HepG2 (cell line): ENCODE measurements at regions of chr3 and their contacts with region 1.

Region 1: DNA sequence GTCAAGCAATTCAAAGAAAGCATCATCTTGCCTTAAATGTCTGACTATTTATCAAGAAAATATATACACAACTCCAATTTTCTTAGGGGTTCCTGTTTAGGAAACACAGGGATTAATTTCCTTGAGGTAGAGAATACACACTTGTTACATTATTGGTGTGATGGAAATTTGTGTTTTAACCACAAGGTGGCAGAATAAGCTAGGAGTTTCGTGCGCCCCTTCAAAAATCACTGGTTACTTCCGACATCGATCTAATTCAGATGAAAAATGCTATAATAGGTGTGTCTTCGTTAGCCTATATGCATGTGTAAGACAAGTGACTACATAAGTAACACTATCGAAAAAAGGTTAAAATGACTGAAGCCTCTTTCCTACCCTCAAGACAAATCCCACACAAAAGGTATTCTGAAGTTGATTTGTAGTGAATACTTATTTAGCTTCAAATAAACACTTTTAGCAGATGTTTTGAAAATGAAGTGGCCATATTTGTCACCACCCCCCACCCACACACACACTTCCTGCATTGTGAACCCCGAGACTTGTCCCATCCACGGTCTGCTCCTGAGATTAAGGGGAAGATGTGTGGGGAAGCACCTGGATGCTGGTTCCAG is 246.5 kb downstream of the ROBO1 start:
- DNase-seq: peak; percentile 35
- ATAC-seq: peak; percentile 71
- H3K4me3 ChIP-seq: no peak overlapping the region
- H3K27ac ChIP-seq: no peak overlapping the region
- H3K4me1 ChIP-seq: no peaks in the 10 kb centered on the region
- H3K27me3 ChIP-seq: no peaks in the 10 kb centered on the region
- CTCF ChIP-seq: peak; percentile 72
- EP300 ChIP-seq: no peak
- POLR2A ChIP-seq: no peak
- RAD21 ChIP-seq: peak; percentile 66

Region 2: DNA sequence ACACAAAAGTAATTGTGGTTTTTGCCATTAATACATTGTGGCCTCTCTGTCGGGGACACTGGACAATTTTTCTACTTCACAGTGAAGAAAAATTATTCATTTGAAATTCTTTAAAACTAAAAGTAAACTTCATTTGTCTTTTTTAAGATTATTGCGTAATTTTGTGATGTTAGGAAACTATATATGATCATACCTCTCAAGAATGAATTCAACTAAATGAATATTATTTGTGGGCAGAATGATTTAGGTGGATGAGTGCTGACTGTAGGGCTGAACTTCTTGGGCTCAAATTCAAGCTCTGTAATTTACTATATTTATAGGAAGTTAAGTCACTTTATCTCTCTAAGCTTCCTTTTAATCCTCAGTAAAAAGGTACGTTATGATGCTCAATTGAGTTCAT is 194.7 kb before region 1 on chr3:
- CTCF ChIA-PET with region 1: no interaction called
- POLR2A ChIA-PET with region 1: no interaction called
- in situ Hi-C with region 1: no loop called
- intact Hi-C with region 1: no loop called
- DNase-seq: no peak
- ATAC-seq: no peak
- H3K4me3 ChIP-seq: no peak overlapping the region
- H3K27ac ChIP-seq: no peak overlapping the region
- H3K4me1 ChIP-seq: no peaks in the 10 kb centered on the region
- H3K27me3 ChIP-seq: no peaks in the 10 kb centered on the region
- CTCF ChIP-seq: no peak
- EP300 ChIP-seq: no peak
- POLR2A ChIP-seq: no peak
- RAD21 ChIP-seq: no peak

Region 3: DNA sequence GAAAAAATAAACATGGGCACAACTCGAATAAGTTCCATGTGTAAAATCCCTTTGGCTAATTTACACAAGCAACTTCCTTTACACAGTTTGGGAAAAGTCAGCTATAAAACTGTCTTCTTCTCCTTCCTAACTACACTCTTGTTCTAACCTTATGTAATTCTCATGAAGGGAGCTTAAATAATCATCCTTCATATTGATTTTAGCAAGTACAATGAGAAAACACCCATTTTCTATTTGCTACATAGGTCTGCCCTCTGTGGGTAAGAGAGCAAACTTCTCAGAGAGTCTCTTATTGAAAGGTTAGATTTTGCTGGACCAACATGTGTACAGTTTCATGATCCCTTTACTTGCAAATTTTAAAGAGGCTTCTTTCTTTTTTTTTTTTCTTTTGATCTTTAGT is 152.0 kb before region 1 on chr3:
- CTCF ChIA-PET with region 1: no interaction called
- POLR2A ChIA-PET with region 1: no interaction called
- in situ Hi-C with region 1: no loop called
- intact Hi-C with region 1: no loop called
- DNase-seq: no peak
- ATAC-seq: peak; percentile 32; the same call in 1 of the 3 replicates
- H3K4me3 ChIP-seq: no peak overlapping the region
- H3K27ac ChIP-seq: no peak overlapping the region
- H3K4me1 ChIP-seq: no peaks in the 10 kb centered on the region
- H3K27me3 ChIP-seq: no peaks in the 10 kb centered on the region
- CTCF ChIP-seq: no peak
- EP300 ChIP-seq: no peak
- POLR2A ChIP-seq: no peak
- RAD21 ChIP-seq: no peak

Region 4: DNA sequence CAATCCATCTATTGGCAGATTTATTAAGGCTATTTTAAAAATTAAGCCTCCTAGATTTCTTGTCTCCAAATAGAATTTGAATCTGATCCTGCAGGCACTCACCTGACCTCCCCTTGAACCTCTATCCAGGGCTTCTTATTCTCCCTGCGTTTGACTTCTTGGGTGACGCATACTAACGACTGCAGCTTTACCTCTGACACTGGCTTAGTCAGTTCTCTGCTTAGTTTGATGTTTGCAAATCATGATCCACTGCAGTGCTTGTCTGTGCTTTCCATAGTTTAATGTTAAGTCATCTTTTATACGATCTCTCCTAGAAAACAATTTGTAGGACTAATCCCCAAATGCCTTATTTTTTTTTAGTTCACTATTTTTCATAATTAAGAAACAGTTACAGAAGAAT is 13.4 kb after region 1 on chr3:
- CTCF ChIA-PET with region 1: no interaction called
- POLR2A ChIA-PET with region 1: no interaction called
- in situ Hi-C with region 1: no loop called
- intact Hi-C with region 1: no loop called
- DNase-seq: no peak
- ATAC-seq: no peak
- H3K4me3 ChIP-seq: no peak overlapping the region
- H3K27ac ChIP-seq: no peak overlapping the region
- H3K4me1 ChIP-seq: no peaks in the 10 kb centered on the region
- H3K27me3 ChIP-seq: no peaks in the 10 kb centered on the region
- CTCF ChIP-seq: no peak
- EP300 ChIP-seq: no peak
- POLR2A ChIP-seq: no peak
- RAD21 ChIP-seq: no peak

Region 5: DNA sequence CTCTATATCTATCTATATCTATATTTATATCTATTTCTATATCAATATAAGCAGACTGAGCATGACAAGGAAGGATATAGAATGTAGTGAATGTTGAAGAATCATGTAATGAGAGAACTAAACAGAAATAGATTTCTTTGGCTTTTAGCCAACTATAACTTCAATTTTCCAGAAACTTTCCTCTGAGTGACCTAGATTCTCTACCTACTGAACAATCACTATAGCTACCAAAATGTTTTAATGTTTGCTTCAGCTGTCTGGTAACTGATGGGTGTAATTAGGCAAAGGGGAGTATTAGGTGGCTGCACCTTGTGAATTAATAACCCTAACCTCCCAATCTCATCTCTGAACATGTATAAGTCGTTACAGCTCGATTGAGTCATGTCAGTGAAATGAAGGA is 322.8 kb after region 1 on chr3:
- CTCF ChIA-PET with region 1: interaction called, 3 read pairs
- POLR2A ChIA-PET with region 1: no interaction called
- in situ Hi-C with region 1: no loop called
- intact Hi-C with region 1: loop called (anchors 5 kb)
- DNase-seq: no peak
- ATAC-seq: no peak
- H3K4me3 ChIP-seq: no peak overlapping the region
- H3K27ac ChIP-seq: no peak overlapping the region
- H3K4me1 ChIP-seq: no peaks in the 10 kb centered on the region
- H3K27me3 ChIP-seq: no peaks in the 10 kb centered on the region
- CTCF ChIP-seq: no peak
- EP300 ChIP-seq: no peak
- POLR2A ChIP-seq: no peak
- RAD21 ChIP-seq: no peak

Region 6: GRCh38 chr3:80559701-80560100 is 1038.4 kb after region 1 on chr3:
- CTCF ChIA-PET with region 1: interaction called, 4 read pairs
- POLR2A ChIA-PET with region 1: no interaction called
- in situ Hi-C with region 1: no loop called
- intact Hi-C with region 1: loop called (anchors 1 kb)
- DNase-seq: peak; percentile 3
- ATAC-seq: peak; percentile 92
- H3K4me3 ChIP-seq: no peak overlapping the region
- H3K27ac ChIP-seq: no peak overlapping the region
- H3K4me1 ChIP-seq: no peaks in the 10 kb centered on the region
- H3K27me3 ChIP-seq: no peaks in the 10 kb centered on the region
- CTCF ChIP-seq: peak; percentile 46; the same call in 1 of the 2 replicates
- EP300 ChIP-seq: no peak
- POLR2A ChIP-seq: no peak
- RAD21 ChIP-seq: no peak

Region 7: GRCh38 chr3:80688814-80689213 is 1167.5 kb after region 1 on chr3:
- CTCF ChIA-PET with region 1: interaction called, 4 read pairs
- POLR2A ChIA-PET with region 1: no interaction called
- in situ Hi-C with region 1: loop called (anchors 25 kb)
- intact Hi-C with region 1: loop called (anchors 1 kb)
- DNase-seq: peak; percentile 19
- ATAC-seq: no peak
- H3K4me3 ChIP-seq: no peak overlapping the region
- H3K27ac ChIP-seq: no peak overlapping the region
- H3K4me1 ChIP-seq: no peaks in the 10 kb centered on the region
- H3K27me3 ChIP-seq: no peaks in the 10 kb centered on the region; a peak in 1 of 5 replicates
- CTCF ChIP-seq: peak; percentile 46
- EP300 ChIP-seq: no peak
- POLR2A ChIP-seq: no peak
- RAD21 ChIP-seq: no peak

Region 8: GRCh38 chr3:81173514-81173913 is 1652.2 kb after region 1 on chr3:
- CTCF ChIA-PET with region 1: no interaction called
- POLR2A ChIA-PET with region 1: no interaction called
- in situ Hi-C with region 1: no loop called
- intact Hi-C with region 1: loop called (anchors 5 kb)
- DNase-seq: peak; percentile 10
- ATAC-seq: peak; percentile 64; the same call in 2 of the 3 replicates
- H3K4me3 ChIP-seq: no peak overlapping the region
- H3K27ac ChIP-seq: no peak overlapping the region
- H3K4me1 ChIP-seq: no peaks in the 10 kb centered on the region
- H3K27me3 ChIP-seq: no peaks in the 10 kb centered on the region
- CTCF ChIP-seq: peak; percentile 36; the same call in 1 of the 2 replicates
- EP300 ChIP-seq: no peak
- POLR2A ChIP-seq: no peak
- RAD21 ChIP-seq: no peak